Activated naive CD8-positive, alpha-beta T cell treated with anti-CD3 and anti-CD28 coated beads, Interleukin-2, amount 10 ng/mL, durations not matched to agents 7 days and 5 days (primary cell): ENCODE measurements at regions of chr1 and their contacts with region 1.

Region 1: GRCh38 chr1:54488779-54489626 is 59.0 kb upstream of the ACOT11 start:
- DNase-seq: peak; percentile 89
- ATAC-seq: peak; percentile 69
- H3K4me3 Mint-ChIP-seq: peak overlapping the region; percentile 86
- H3K27ac Mint-ChIP-seq: peak overlapping the region; percentile 81
- H3K4me1 Mint-ChIP-seq: peaks cover 27% of the 10 kb centered on the region
- H3K27me3 Mint-ChIP-seq: peaks cover 24% of the 10 kb centered on the region

Region 2: GRCh38 chr1:54052934-54053744 is 435.9 kb before region 1 on chr1 and contains the starts of genes TCEANC2 and TMEM59:
- POLR2A ChIA-PET with region 1: interaction called, 10 read pairs
- DNase-seq: peak; percentile 93
- ATAC-seq: peak; percentile 96
- H3K4me3 Mint-ChIP-seq: no peak within 1 kb of the TSS
- H3K27ac Mint-ChIP-seq: no peak within 1 kb of the TSS
- H3K4me1 Mint-ChIP-seq: peaks cover 26% of the 10 kb centered on the region
- H3K27me3 Mint-ChIP-seq: no peaks in the 10 kb centered on the region
- total RNA-seq, gene TCEANC2: 11.7 to 13.5 TPM
- total RNA-seq, gene TMEM59: 182 to 192 TPM

Region 3: DNA sequence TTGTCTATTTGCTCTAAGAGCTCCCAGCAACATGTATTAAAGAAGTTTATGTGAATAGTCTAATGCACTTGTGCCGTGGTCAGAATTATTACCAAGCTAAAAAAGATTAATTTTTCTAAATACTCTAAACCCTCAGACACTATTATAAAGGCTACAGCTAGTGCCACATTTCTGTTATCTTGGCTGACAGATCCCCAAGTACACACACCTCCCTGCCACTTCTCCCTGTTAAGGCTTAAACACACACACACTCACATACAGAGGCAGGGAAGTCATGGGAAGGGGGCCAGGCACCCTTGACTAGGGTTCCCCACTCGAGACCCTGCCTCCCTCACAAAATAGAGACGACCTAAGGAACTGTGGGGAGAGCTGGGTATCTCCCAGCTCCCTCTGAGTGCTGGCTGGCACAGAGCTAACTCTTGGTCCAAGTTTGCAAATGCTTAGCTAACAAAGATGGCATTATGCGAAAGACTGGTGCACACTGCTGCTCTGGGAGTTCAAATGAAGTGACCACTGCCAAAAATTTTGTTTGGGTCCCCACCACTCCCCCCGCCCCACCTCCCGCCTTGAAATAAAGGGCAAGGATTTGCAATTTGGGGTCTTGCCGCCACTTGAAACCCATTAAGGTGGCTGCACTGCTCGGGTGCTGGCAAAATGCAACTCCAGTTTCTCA is 92.6 kb before region 1 on chr1:
- POLR2A ChIA-PET with region 1: no interaction called
- DNase-seq: no peak
- ATAC-seq: no peak
- H3K4me3 Mint-ChIP-seq: no peak overlapping the region
- H3K27ac Mint-ChIP-seq: peak overlapping the region; percentile 46
- H3K4me1 Mint-ChIP-seq: peaks cover 25% of the 10 kb centered on the region
- H3K27me3 Mint-ChIP-seq: no peaks in the 10 kb centered on the region

Region 4: DNA sequence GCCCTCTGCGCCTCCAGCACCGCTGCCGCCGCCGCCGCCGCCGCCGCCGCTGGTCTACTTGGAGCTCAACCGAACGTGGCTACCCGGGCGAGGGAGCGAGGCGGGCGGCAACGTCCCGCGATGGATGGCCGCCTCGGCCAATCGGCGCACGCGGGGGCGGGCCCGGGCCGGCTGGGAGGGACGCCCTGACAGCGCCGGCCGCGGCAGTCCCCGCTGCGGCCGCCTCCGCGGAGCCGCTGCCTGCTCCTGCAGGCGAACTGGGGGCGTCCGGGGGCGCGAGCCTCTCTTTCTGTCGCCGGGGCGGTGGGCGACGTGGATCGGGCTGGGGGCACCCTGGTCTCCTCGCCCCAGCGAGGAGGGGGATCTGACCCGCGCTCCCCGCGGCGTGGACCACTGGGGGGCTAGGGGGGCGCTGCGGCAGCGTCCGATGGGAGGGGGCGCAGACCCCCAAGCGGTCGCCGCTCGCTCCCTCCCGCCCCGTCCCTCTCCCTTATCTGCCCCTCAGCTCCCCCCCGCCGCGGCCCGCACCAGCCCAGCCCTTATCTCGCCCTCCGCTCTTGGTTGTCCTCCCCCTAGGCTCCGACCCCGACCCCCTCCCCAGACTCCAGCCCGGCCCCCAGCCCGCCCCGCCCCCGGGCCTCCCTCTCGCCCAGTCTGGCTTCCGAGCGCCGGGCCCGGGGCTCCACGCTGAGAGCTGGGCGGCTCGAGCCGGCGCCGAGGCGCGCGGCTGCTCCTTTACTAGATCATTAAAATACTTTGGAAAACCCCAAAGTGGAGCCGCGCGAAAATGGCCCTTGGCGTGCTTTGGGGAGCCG is 82.5 kb before region 1 on chr1 and contains the start of gene SSBP3:
- POLR2A ChIA-PET with region 1: interaction called, 74 read pairs
- DNase-seq: peak; percentile 97
- ATAC-seq: peak; percentile 89
- H3K4me3 Mint-ChIP-seq: peak within 1 kb of the TSS; percentile 91
- H3K27ac Mint-ChIP-seq: peak within 1 kb of the TSS; percentile 84
- H3K4me1 Mint-ChIP-seq: peaks cover 65% of the 10 kb centered on the region
- H3K27me3 Mint-ChIP-seq: no peaks in the 10 kb centered on the region
- total RNA-seq, gene SSBP3: 109 to 126 TPM

Region 5: DNA sequence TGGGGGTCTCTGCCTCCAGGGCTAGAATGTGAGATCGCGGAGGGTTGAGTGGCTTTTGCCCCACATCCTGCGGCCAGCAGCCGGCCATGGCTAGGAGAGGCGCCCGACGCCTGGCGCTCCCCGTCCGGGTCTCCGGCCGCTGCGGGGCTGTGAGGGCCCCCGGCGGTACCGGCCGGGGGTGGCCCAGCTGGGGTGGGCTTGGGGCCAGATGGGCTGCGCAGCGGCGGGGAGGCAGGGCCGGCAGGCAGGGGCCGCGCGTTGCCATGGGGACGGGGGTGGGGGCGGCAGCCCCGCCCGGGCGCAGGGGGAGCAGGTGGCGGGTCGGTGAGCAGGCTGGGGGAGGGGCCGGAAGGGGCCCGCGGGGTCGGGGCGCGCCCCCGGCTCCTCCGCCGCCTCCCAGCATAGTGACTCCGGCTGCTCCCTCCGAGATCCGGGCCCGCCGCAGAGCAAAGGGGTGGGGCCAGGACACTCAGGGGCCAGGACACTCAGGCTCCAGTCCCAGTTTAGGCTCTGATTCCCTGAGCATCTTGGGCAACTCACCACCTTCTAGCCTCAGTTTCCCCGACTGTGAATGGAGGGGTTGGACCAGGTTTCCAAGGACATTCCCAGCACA is 14.3 kb before region 1 on chr1:
- POLR2A ChIA-PET with region 1: interaction called, 24 read pairs
- DNase-seq: peak; percentile 63
- ATAC-seq: peak; percentile 59
- H3K4me3 Mint-ChIP-seq: peak overlapping the region; percentile 77
- H3K27ac Mint-ChIP-seq: peak overlapping the region; percentile 69
- H3K4me1 Mint-ChIP-seq: peaks cover 41% of the 10 kb centered on the region
- H3K27me3 Mint-ChIP-seq: peaks cover 15% of the 10 kb centered on the region

Region 6: GRCh38 chr1:54537611-54538010 is 48.6 kb after region 1 on chr1:
- POLR2A ChIA-PET with region 1: no interaction called
- DNase-seq: no peak
- ATAC-seq: no peak
- H3K4me3 Mint-ChIP-seq: no peak overlapping the region
- H3K27ac Mint-ChIP-seq: no peak overlapping the region
- H3K4me1 Mint-ChIP-seq: peaks cover 8% of the 10 kb centered on the region
- H3K27me3 Mint-ChIP-seq: peaks cover 45% of the 10 kb centered on the region

Region 7: DNA sequence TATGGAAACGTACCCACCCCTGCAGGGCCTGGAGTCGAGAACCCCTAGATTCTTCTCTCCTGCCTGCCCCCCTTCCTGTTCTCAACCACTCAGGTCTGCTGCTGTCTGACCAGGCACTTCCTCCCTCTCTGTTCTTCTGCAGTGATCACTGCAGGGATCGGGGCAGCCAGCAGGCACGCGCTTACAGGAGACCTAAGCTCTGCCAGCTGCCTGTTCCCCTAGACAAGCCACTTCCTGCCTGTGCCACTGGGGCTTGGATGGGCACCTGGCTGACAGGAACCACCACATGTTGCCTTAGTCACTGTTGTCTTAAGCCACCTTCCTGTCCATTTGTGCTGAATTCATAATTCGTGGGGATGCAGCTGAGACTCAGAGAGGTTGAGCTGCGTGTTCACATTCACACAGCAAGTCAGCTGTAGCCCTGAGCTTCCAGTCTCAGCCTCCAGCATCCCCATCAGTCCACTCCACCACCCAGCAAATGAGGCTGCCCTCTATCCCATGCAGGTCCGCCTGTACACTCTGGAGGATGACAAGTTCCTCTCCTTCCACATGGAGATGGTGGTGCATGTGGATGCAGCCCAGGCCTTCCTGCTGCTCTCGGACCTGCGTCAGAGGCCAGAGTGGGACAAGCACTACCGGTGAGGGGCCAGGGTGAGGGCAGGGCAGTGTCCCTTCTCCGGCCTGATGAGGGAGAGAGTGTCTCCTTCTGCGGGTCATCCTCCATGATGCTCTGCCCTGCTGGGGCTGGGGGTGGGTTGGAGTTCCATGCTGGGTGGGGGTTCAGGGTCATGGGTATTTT is 115.8 kb after region 1 on chr1:
- POLR2A ChIA-PET with region 1: no interaction called
- DNase-seq: peak; percentile 48
- ATAC-seq: peak; percentile 92
- H3K4me3 Mint-ChIP-seq: peak overlapping the region; percentile 13
- H3K27ac Mint-ChIP-seq: peak overlapping the region; percentile 67
- H3K4me1 Mint-ChIP-seq: peaks cover 14% of the 10 kb centered on the region
- H3K27me3 Mint-ChIP-seq: no peaks in the 10 kb centered on the region